Caco-2 (cell line): ENCODE measurements at regions of chr13 and their contacts with region 1.

Region 1: DNA sequence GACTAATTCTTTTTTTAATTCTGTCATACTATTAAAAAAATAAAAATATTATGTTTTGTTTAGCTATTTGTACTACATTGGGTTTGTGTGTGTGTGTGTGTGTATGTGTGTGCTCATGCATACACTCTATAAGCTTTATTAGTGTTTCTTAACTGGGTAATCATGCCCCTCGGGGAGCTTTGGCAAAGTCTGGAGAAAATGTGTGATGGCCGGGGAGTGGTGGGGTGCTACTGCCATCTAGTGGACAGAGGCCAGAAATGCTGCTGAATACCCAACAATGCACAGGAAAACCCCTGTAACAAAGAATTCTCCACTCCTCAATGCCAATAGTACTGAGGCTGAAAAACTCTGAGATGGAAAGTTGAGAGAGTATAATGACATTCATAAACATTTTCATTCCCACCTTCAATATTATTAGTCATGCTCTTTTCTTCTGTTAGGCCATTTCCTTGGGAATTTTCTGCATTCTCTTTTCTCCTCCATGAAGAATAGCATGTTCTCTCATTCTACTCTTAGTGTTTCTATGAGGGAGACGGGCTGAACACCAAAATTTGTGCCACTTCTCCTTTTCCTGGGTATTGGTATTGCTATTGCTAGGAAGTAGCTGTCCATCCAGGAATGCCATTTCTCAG is 157.3 kb downstream of the DNAJC3 start:
- DNase-seq: peak; percentile 69 to 77
- H3K4me3 ChIP-seq: no peak overlapping the region
- H3K4me3 Mint-ChIP-seq: no peak overlapping the region
- H3K27ac Mint-ChIP-seq: no peak overlapping the region
- H3K4me1 ChIP-seq: no peaks in the 10 kb centered on the region
- H3K4me1 Mint-ChIP-seq: no peaks in the 10 kb centered on the region
- H3K27me3 ChIP-seq: no peaks in the 10 kb centered on the region
- H3K27me3 Mint-ChIP-seq: no peaks in the 10 kb centered on the region
- CTCF ChIP-seq: peak; percentile 92 to 94

Region 2: GRCh38 chr13:95536632-95537241 is 297.5 kb before region 1 on chr13:
- CTCF ChIA-PET with region 1: interaction called, 5 read pairs
- POLR2A ChIA-PET with region 1: no interaction called
- intact Hi-C with region 1: loop called (anchors 1 kb)
- DNase-seq: no peak
- H3K4me3 ChIP-seq: no peak overlapping the region
- H3K4me3 Mint-ChIP-seq: no peak overlapping the region
- H3K27ac Mint-ChIP-seq: no peak overlapping the region
- H3K4me1 ChIP-seq: no peaks in the 10 kb centered on the region
- H3K4me1 Mint-ChIP-seq: peaks cover 25% of the 10 kb centered on the region
- H3K27me3 ChIP-seq: no peaks in the 10 kb centered on the region
- H3K27me3 Mint-ChIP-seq: peaks cover 3% of the 10 kb centered on the region
- CTCF ChIP-seq: peak; percentile 32 to 55

Region 3: GRCh38 chr13:95660981-95661581 is 173.2 kb before region 1 on chr13:
- CTCF ChIA-PET with region 1: no interaction called
- POLR2A ChIA-PET with region 1: no interaction called
- intact Hi-C with region 1: loop called (anchors 1 kb)
- DNase-seq: peak in 1 of 2 experiments; percentile 67
- H3K4me3 ChIP-seq: no peak overlapping the region
- H3K4me3 Mint-ChIP-seq: no peak overlapping the region
- H3K27ac Mint-ChIP-seq: no peak overlapping the region
- H3K4me1 ChIP-seq: peaks cover 15% of the 10 kb centered on the region
- H3K4me1 Mint-ChIP-seq: peaks cover 14% of the 10 kb centered on the region
- H3K27me3 ChIP-seq: no peaks in the 10 kb centered on the region
- H3K27me3 Mint-ChIP-seq: peaks cover 3% of the 10 kb centered on the region
- CTCF ChIP-seq: peak; percentile 67 to 75

Region 4: GRCh38 chr13:95704510-95704909 is 129.7 kb before region 1 on chr13:
- CTCF ChIA-PET with region 1: interaction called, 4 read pairs
- POLR2A ChIA-PET with region 1: no interaction called
- intact Hi-C with region 1: loop called (anchors 1 kb)
- DNase-seq: peak in 1 of 2 experiments; percentile 31
- H3K4me3 ChIP-seq: no peak overlapping the region
- H3K4me3 Mint-ChIP-seq: no peak overlapping the region
- H3K27ac Mint-ChIP-seq: no peak overlapping the region
- H3K4me1 ChIP-seq: no peaks in the 10 kb centered on the region
- H3K4me1 Mint-ChIP-seq: no peaks in the 10 kb centered on the region
- H3K27me3 ChIP-seq: no peaks in the 10 kb centered on the region
- H3K27me3 Mint-ChIP-seq: no peaks in the 10 kb centered on the region
- CTCF ChIP-seq: peak; percentile 29 to 35